B cell (primary cell): ENCODE measurements at regions of chr1 and their contacts with region 1.

Region 1: DNA sequence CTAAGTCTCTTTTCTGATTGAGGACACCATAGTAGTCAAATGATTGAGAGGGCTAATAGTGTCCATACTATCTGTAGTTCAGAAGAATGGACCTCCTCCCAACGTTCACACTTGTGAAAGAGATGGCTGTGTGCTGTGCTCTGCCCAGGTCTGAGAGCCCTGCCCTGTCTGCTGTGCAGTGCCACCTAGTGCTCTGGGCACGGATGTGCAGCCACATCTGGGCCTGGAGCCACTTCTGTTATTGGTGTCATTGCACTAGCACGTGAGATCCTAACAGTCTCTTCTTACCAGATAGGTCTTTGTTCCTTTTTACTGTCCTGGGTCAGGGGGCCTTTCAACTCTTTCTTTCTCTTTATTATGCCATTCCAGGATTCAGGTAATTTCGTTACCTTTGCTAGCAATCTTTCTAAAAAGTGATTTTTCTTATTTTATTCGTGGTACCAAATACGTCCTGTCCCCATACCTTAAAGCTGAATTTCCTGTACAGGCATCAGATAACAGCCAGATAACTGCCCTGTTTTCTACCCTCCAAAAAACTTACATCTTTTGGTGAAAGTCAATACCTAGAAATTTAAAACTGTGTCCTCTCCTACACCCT is 21.7 kb downstream of the INTS3 start:
- DNase-seq: peak; percentile 86
- ATAC-seq: peak; percentile 100
- H3K4me3 ChIP-seq: no peak overlapping the region
- H3K4me3 Mint-ChIP-seq: no peak overlapping the region
- H3K27ac ChIP-seq: no peak overlapping the region
- H3K27ac Mint-ChIP-seq: no peak overlapping the region
- H3K4me1 ChIP-seq: peaks cover 0 to 5% of the 10 kb centered on the region in 2 donors
- H3K4me1 Mint-ChIP-seq: peaks cover 6% of the 10 kb centered on the region
- H3K27me3 ChIP-seq: no peaks in the 10 kb centered on the region
- H3K27me3 Mint-ChIP-seq: no peaks in the 10 kb centered on the region
- CTCF ChIP-seq: peak; percentile 91

Region 2: DNA sequence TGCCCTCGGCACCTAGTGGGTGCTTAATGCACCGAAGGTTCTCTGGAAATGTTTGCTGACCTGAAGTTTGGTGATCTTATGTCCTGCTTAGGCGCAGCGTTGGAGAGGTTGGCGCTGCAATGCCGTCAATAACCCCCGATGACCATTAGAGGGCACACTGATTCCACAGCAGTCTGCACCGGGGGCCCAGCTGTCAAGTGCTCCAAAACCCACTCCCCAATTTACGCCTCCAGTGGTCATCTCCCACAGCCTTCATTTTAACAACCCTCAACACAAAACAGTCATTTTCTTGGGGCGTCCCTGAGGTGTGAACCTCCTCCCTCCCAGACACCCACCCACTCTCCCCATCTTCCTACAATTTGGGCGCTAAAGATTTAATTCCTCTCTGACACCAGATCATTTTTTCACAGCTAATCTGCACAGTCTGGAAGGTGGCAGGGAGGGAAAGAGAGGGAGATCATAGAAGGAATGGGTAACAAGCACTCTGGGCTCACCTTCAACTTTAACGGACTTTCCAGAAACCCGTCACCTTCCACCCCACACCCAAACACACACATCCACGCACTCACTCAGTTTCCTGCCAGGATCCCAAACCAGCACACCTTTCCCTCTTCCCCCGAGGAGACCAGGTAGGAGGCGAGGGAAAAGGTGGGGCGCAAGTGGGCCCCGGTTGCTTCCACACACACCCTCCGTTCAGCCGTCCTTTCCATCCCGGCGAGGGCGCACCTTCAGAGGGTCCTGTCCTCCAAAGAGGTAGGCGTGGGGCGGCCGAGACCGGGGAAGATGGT is 71.6 kb before region 1 on chr1:
- CTCF ChIA-PET with region 1: interaction called, 50 read pairs
- POLR2A ChIA-PET with region 1: interaction called, 5 read pairs
- intact Hi-C with region 1: loop called (anchors 1 kb)
- DNase-seq: peak; percentile 73
- ATAC-seq: peak; percentile 77
- H3K4me3 ChIP-seq: peak overlapping the region in 4 of 5 experiments; percentile 28 to 57 (median 50)
- H3K4me3 Mint-ChIP-seq: peak overlapping the region; percentile 94
- H3K27ac ChIP-seq: no peak overlapping the region
- H3K27ac Mint-ChIP-seq: peak overlapping the region; percentile 5
- H3K4me1 ChIP-seq: peaks cover 26 to 30% of the 10 kb centered on the region in 2 donors
- H3K4me1 Mint-ChIP-seq: peaks cover 26% of the 10 kb centered on the region
- H3K27me3 ChIP-seq: peaks cover 0 to 37% (median 24%) of the 10 kb centered on the region in 4 experiments
- H3K27me3 Mint-ChIP-seq: peaks cover 49% of the 10 kb centered on the region
- CTCF ChIP-seq: peak; percentile 88

Region 3: GRCh38 chr1:153698020-153698931 is 51.2 kb before region 1 on chr1:
- CTCF ChIA-PET with region 1: no interaction called
- POLR2A ChIA-PET with region 1: no interaction called
- intact Hi-C with region 1: no loop called
- DNase-seq: no peak
- ATAC-seq: no peak
- H3K4me3 ChIP-seq: peak overlapping the region in 3 of 5 experiments; percentile 37 to 40 (median 39)
- H3K4me3 Mint-ChIP-seq: peak overlapping the region; percentile 59
- H3K27ac ChIP-seq: no peak overlapping the region
- H3K27ac Mint-ChIP-seq: no peak overlapping the region
- H3K4me1 ChIP-seq: peaks cover 0 to 7% of the 10 kb centered on the region in 2 donors
- H3K4me1 Mint-ChIP-seq: peaks cover 3% of the 10 kb centered on the region
- H3K27me3 ChIP-seq: peaks cover 0 to 9% (median 0%) of the 10 kb centered on the region in 4 experiments
- H3K27me3 Mint-ChIP-seq: no peaks in the 10 kb centered on the region
- CTCF ChIP-seq: no peak

Region 4: GRCh38 chr1:153727463-153728304 is 21.8 kb before region 1 on chr1 and contains the start of gene INTS3:
- CTCF ChIA-PET with region 1: interaction called, 7 read pairs
- POLR2A ChIA-PET with region 1: no interaction called
- intact Hi-C with region 1: loop called (anchors 2 kb)
- DNase-seq: peak; percentile 99
- ATAC-seq: peak; percentile 99
- H3K4me3 ChIP-seq: peak within 1 kb of the TSS; percentile 78 to 99 (median 91)
- H3K4me3 Mint-ChIP-seq: peak within 1 kb of the TSS; percentile 84
- H3K27ac ChIP-seq: peak within 1 kb of the TSS; percentile 97 to 98
- H3K27ac Mint-ChIP-seq: peak within 1 kb of the TSS; percentile 86
- H3K4me1 ChIP-seq: peaks cover 9 to 16% of the 10 kb centered on the region in 2 donors
- H3K4me1 Mint-ChIP-seq: peaks cover 36% of the 10 kb centered on the region
- H3K27me3 ChIP-seq: no peaks in the 10 kb centered on the region
- H3K27me3 Mint-ChIP-seq: no peaks in the 10 kb centered on the region
- CTCF ChIP-seq: no peak
- total RNA-seq, gene INTS3: 69.1 and 69.3 TPM in 2 replicates

Region 5: GRCh38 chr1:153764310-153764709 is 14.8 kb after region 1 on chr1:
- CTCF ChIA-PET with region 1: no interaction called
- POLR2A ChIA-PET with region 1: no interaction called
- intact Hi-C with region 1: no loop called
- DNase-seq: no peak
- ATAC-seq: no peak
- H3K4me3 ChIP-seq: no peak overlapping the region
- H3K4me3 Mint-ChIP-seq: no peak overlapping the region
- H3K27ac ChIP-seq: no peak overlapping the region
- H3K27ac Mint-ChIP-seq: no peak overlapping the region
- H3K4me1 ChIP-seq: no peaks in the 10 kb centered on the region
- H3K4me1 Mint-ChIP-seq: peaks cover 2% of the 10 kb centered on the region
- H3K27me3 ChIP-seq: no peaks in the 10 kb centered on the region
- H3K27me3 Mint-ChIP-seq: no peaks in the 10 kb centered on the region
- CTCF ChIP-seq: no peak

Region 6: DNA sequence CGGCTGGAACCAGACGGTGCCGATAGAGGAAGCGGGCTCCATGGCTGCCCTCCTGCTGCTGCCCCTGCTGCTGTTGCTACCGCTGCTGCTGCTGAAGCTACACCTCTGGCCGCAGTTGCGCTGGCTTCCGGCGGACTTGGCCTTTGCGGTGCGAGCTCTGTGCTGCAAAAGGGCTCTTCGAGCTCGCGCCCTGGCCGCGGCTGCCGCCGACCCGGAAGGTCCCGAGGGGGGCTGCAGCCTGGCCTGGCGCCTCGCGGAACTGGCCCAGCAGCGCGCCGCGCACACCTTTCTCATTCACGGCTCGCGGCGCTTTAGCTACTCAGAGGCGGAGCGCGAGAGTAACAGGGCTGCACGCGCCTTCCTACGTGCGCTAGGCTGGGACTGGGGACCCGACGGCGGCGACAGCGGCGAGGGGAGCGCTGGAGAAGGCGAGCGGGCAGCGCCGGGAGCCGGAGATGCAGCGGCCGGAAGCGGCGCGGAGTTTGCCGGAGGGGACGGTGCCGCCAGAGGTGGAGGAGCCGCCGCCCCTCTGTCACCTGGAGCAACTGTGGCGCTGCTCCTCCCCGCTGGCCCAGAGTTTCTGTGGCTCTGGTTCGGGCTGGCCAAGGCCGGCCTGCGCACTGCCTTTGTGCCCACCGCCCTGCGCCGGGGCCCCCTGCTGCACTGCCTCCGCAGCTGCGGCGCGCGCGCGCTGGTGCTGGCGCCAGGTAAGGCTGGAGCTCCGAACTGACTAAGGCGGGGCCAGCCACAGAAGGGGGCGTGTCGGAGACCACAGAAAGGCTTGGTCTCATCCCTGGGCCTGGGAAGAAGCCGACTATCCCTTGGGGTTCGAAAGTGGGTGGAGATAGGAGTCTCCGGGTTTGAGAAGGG is 26.2 kb after region 1 on chr1:
- CTCF ChIA-PET with region 1: interaction called, 3 read pairs
- POLR2A ChIA-PET with region 1: no interaction called
- intact Hi-C with region 1: loop called (anchors 1 kb)
- DNase-seq: peak; percentile 77
- ATAC-seq: peak; percentile 68
- H3K4me3 ChIP-seq: peak overlapping the region; percentile 49 to 80 (median 71)
- H3K4me3 Mint-ChIP-seq: peak overlapping the region; percentile 91
- H3K27ac ChIP-seq: peak overlapping the region; percentile 34 to 48
- H3K27ac Mint-ChIP-seq: peak overlapping the region; percentile 84
- H3K4me1 ChIP-seq: peaks cover 22 to 35% of the 10 kb centered on the region in 2 donors
- H3K4me1 Mint-ChIP-seq: peaks cover 31% of the 10 kb centered on the region
- H3K27me3 ChIP-seq: no peaks in the 10 kb centered on the region
- H3K27me3 Mint-ChIP-seq: no peaks in the 10 kb centered on the region
- CTCF ChIP-seq: no peak

Region 7: DNA sequence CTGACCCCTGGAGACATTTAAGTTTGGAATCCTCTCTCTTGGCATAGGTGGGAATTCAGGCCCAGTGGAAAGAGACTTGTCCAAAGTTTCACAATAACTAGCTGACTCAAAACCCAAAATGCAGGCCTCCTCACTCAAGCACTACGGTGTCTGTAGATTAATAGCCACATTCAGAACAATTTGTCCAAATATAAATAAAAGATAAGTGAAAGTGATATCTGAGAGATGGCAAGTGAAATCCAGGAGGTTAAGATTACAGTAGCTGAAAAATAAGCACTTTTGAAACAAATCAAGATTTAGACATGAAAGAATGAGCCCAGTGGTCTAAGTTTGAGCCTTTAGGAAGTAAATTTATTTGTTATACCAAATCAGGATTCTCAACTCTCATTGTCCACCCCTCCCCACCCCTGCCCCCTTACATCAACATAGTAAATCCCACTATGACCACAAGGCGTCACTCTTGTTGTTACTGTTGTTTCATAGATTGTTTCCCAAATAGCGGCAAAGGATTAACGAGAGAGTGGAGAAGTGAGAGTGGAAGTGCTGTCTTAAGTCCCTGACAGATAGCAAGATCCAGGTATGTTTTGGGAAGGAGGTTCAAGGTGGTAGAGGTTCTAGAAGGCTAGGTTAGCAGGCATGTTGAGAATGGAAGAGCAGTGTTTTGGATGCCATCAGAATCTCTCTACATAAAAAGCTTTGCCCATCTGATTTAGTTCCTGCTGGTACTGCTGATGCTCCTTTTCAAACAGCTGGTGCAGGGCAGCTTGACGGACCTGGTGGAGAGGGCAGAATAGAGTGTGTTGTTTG is 449.5 kb after region 1 on chr1:
- CTCF ChIA-PET with region 1: no interaction called
- POLR2A ChIA-PET with region 1: no interaction called
- intact Hi-C with region 1: no loop called
- DNase-seq: peak; percentile 77
- ATAC-seq: peak; percentile 76
- H3K4me3 ChIP-seq: no peak overlapping the region
- H3K4me3 Mint-ChIP-seq: no peak overlapping the region
- H3K27ac ChIP-seq: peak overlapping the region in 1 of 2 donors; percentile 28
- H3K27ac Mint-ChIP-seq: no peak overlapping the region
- H3K4me1 ChIP-seq: peaks cover 5 to 10% of the 10 kb centered on the region in 2 donors
- H3K4me1 Mint-ChIP-seq: no peaks in the 10 kb centered on the region
- H3K27me3 ChIP-seq: no peaks in the 10 kb centered on the region
- H3K27me3 Mint-ChIP-seq: peaks cover 4% of the 10 kb centered on the region
- CTCF ChIP-seq: peak; percentile 73